ENCODE measurements at regions of chr18 and their contacts with region 1.

Region 1: DNA sequence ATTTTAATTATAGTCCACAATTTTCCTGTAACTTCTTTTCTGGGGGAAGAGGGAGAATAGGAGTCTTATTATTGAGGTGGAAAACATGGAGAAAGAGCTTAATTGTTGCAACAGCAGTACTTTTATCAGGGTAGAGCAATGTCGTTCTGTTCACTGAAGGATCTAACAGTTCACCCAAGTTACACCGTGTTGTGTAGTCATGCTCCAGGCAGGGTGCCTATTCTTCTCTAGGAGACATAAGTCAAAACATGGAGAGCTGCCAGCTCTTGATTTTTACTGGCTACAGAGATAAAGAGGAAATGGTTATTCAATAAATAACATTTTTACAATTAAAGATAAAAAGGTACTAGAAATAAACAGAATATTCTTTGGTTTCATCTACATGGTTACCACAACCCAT is 594.3 kb upstream of the NETO1 start:
- DNase-seq: peak in 1 of 5 donors; percentile 12
- ATAC-seq: peak; percentile 54 to 72 (median 62)
- H3K4me3 ChIP-seq: no peak overlapping the region
- H3K27ac ChIP-seq: peak overlapping the region in 6 of 12 donors; percentile 7 to 67 (median 22)
- H3K4me1 ChIP-seq: peaks cover 0 to 10% (median 0%) of the 10 kb centered on the region in 12 donors
- H3K27me3 ChIP-seq: no peaks in the 10 kb centered on the region
- CTCF ChIP-seq: no peak
- POLR2A ChIP-seq: no peak

Region 2: DNA sequence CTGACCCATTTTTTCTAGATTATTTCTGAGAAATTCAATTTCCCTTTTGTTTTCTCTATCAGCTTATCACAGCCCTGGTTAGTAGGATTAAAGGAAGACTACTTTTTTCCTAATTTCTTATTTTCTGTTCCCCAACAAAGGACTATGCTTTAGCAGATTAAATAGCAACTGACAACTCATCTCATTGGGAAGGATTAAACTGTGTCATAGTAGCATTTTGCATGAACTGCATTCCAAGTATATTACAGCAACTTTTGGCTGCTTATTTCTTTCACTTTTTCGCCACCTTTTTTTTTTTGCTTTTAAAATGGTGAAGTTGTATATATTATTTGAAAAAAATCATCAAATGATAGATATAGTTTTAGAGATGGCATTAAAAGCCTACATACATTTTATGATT is 115.3 kb after region 1 on chr18:
- intact Hi-C with region 1: loop called in 1 of 10 experiments (anchors 10 kb)
- DNase-seq: no peak
- ATAC-seq: no peak
- H3K4me3 ChIP-seq: no peak overlapping the region
- H3K27ac ChIP-seq: no peak overlapping the region
- H3K4me1 ChIP-seq: no peaks in the 10 kb centered on the region
- H3K27me3 ChIP-seq: no peaks in the 10 kb centered on the region
- CTCF ChIP-seq: no peak
- POLR2A ChIP-seq: no peak